A549 (cell line): ENCODE measurements at regions of chr10 and their contacts with region 1.

Region 1: GRCh38 chr10:72254813-72255568 is 18.7 kb upstream of the DDIT4 start:
- DNase-seq: peak; percentile 87 to 94
- ATAC-seq: peak; percentile 91 to 92
- H3K4me3 ChIP-seq: no peak overlapping the region
- H3K27ac ChIP-seq: peak overlapping the region; percentile 99 to 100
- H3K4me1 ChIP-seq: peaks cover 69% of the 10 kb centered on the region
- CTCF ChIP-seq: no peak
- EP300 ChIP-seq: no peak
- POLR2A ChIP-seq: peak; percentile 58
- RAD21 ChIP-seq: peak; percentile 53 to 54

Region 2: DNA sequence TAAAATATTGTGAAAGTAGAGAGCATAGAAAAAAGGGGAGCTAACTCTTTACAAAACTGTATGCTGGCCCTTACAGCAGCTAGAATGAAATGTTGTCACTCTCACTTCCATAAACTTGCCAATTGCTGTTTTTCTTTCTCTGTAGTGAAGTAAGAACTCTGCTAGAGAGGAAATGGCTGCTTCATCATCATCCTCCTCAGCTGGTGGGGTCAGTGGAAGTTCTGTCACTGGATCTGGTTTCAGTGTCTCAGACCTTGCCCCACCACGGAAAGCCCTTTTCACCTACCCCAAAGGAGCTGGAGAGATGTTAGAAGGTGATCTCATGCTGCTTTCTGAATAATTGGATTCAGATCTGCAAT is 31.3 kb before region 1 on chr10:
- CTCF ChIA-PET with region 1: interaction called, 16 read pairs
- POLR2A ChIA-PET with region 1: interaction called, 5 read pairs
- DNase-seq: no peak
- ATAC-seq: no peak
- H3K4me3 ChIP-seq: no peak overlapping the region
- H3K27ac ChIP-seq: peak overlapping the region; percentile 66 to 82
- H3K4me1 ChIP-seq: peaks cover 38% of the 10 kb centered on the region
- CTCF ChIP-seq: no peak
- EP300 ChIP-seq: no peak
- POLR2A ChIP-seq: no peak
- RAD21 ChIP-seq: no peak

Region 3: GRCh38 chr10:72730479-72730878 is 475.5 kb after region 1 on chr10:
- CTCF ChIA-PET with region 1: no interaction called
- POLR2A ChIA-PET with region 1: interaction called, 10 read pairs
- DNase-seq: no peak
- ATAC-seq: no peak
- H3K4me3 ChIP-seq: no peak overlapping the region
- H3K27ac ChIP-seq: no peak overlapping the region
- H3K4me1 ChIP-seq: peaks cover 43% of the 10 kb centered on the region
- CTCF ChIP-seq: no peak
- EP300 ChIP-seq: no peak
- POLR2A ChIP-seq: no peak
- RAD21 ChIP-seq: no peak